Right cardiac atrium (tissue), 5 donors: ENCODE measurements at regions of chr2 and their contacts with region 1.

Region 1: GRCh38 chr2:44807344-44808025 is 134.0 kb upstream of the SIX3 start:
- DNase-seq: no peak
- ATAC-seq: no peak
- H3K4me3 ChIP-seq: no peak overlapping the region
- H3K27ac ChIP-seq: no peak overlapping the region
- H3K4me1 ChIP-seq: peaks cover under 1% of the 10 kb centered on the region
- H3K27me3 ChIP-seq: peaks cover 6% of the 10 kb centered on the region

Region 2: GRCh38 chr2:44833171-44834069 is 25.9 kb after region 1 on chr2:
- intact Hi-C with region 1: loop called in 1 of 4 experiments (anchors 1 kb)
- DNase-seq: no peak
- ATAC-seq: no peak
- H3K4me3 ChIP-seq: no peak overlapping the region
- H3K27ac ChIP-seq: no peak overlapping the region
- H3K4me1 ChIP-seq: no peaks in the 10 kb centered on the region
- H3K27me3 ChIP-seq: no peaks in the 10 kb centered on the region